Dorsolateral prefrontal cortex (tissue), 120 donors: ENCODE measurements at regions of chr20 and their contacts with region 1.

Region 1: DNA sequence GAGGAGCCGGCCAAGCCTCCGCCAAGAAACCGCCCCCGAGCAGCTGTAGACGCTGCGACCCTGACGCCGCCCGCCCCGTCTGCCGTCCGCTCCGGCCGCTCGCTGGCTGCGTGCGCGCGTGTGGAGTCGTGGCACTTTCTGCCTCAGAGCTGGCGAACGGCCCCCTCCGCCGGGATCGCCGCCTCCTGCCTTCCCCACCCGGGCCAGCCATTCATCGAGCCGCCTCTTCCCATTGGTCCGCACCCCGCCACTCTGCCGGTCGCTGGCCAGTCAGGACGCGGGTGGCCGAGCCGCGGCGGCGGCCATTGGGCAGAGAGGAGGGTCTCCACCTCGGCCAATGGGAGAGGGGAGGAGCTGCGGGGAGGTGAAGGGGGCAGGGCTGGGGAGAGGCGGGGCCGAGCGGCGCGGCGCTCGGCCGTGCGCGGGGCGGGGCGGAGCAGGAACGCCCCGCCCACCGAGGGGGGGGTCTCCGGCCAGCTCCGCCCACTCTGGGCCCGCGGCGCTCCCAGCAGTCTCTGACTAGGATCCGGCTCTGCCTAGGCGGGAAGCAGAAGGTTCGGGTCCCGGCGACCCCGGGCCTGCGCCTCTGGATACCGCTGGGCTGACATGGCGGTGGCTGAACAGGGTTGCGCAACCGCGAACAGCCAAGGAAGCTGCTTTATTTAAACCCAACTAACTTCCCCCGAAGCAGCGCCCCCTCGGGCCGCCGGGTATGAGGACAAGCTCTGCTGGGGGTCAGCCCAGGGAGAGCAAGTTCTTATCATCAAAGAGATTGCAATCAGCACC is at the start of gene RRBP1:
- DNase-seq: peak; percentile 97 to 100 (median 99)
- H3K4me3 ChIP-seq: peak within 1 kb of the TSS; percentile 50 to 97 (median 74)
- H3K27ac ChIP-seq: peak within 1 kb of the TSS in 57 of 59 donors; percentile 58 to 97 (median 90)
- H3K27me3 ChIP-seq: no peaks in the 10 kb centered on the region
- CTCF ChIP-seq: peak in 55 of 56 donors; percentile 39 to 84 (median 66)
- total RNA-seq, gene RRBP1: 25.5 to 102 (median 45.7) TPM

Region 2: GRCh38 chr20:17536944-17537444 is 145.3 kb before region 1 on chr20:
- intact Hi-C with region 1: loop called (anchors 5 kb)
- DNase-seq: peak in 8 of 10 donors; percentile 49 to 72 (median 68)
- H3K4me3 ChIP-seq: no peak overlapping the region
- H3K27ac ChIP-seq: no peak overlapping the region
- H3K27me3 ChIP-seq: peaks cover 0 to 5% (median 0%) of the 10 kb centered on the region in 45 donors
- CTCF ChIP-seq: peak; percentile 66 to 93 (median 88)

Region 3: GRCh38 chr20:17661121-17661744 is 21.1 kb before region 1 on chr20:
- intact Hi-C with region 1: loop called in 1 of 2 experiments (anchors 2 kb)
- DNase-seq: peak in 1 of 10 donors; percentile 11
- H3K4me3 ChIP-seq: no peak overlapping the region
- H3K27ac ChIP-seq: peak overlapping the region in 44 of 59 donors; percentile 2 to 89 (median 42)
- H3K27me3 ChIP-seq: no peaks in the 10 kb centered on the region
- CTCF ChIP-seq: no peak

Region 4: GRCh38 chr20:17938871-17939619 is 256.7 kb after region 1 on chr20:
- intact Hi-C with region 1: loop called in 1 of 2 experiments (anchors 2 kb)
- DNase-seq: peak; percentile 48 to 77 (median 65)
- H3K4me3 ChIP-seq: no peak overlapping the region
- H3K27ac ChIP-seq: no peak overlapping the region
- H3K27me3 ChIP-seq: no peaks in the 10 kb centered on the region
- CTCF ChIP-seq: peak; percentile 52 to 85 (median 76)

Region 5: DNA sequence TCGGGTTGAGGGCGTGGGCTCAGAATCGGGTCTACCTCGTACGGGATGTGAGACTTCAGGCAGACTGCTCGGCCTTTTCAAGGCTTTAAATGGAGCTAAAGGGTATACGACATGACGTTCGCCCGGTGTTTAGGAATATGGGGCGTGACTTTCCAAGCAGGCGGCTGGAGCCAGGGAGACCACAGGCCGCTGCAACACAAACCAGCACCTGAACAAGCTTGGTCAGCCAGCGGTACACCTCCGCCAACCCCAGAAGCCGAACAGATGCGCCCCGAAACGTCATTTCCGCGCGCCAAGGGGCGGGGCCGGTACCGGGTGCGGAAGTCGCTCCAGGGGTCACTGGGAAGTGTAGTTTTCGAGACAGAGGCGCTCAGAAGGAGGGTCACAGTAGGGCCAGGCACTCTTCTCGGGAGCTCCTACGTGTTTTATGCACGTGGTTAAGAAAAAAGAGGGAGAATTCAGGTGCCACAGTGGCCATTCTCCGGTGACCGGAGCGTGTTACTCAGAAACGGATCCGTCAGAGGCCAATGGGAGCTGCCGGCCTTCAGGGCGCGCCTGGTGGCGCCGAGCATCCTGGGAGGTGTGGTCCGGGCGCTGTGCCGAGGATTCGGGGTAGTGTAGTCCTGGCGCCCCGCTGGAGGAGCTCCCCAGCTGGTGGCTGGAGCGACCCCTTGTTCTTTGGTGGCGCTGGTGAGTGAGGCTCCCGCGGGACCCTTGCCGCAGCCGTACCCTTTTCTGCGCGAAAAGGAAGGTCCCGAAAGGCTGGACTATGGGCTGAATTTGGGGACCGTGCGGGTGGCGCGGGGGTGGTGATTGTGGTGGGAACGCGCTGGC is 605.8 kb after region 1 on chr20 and contains the start of gene ZNF133:
- intact Hi-C with region 1: loop called in 1 of 2 experiments (anchors 10 kb)
- DNase-seq: peak; percentile 94 to 98 (median 96)
- H3K4me3 ChIP-seq: peak within 1 kb of the TSS; percentile 65 to 99 (median 90)
- H3K27ac ChIP-seq: peak within 1 kb of the TSS; percentile 88 to 100 (median 98)
- H3K27me3 ChIP-seq: peaks cover 0 to 5% (median 0%) of the 10 kb centered on the region in 45 donors
- CTCF ChIP-seq: peak in 44 of 56 donors; percentile 2 to 62 (median 38)
- total RNA-seq, gene ZNF133: 14.6 to 30.7 (median 23.0) TPM